Activated naive CD4-positive, alpha-beta T cell treated with anti-CD3 and anti-CD28 coated beads for 36 hours (primary cell): ENCODE measurements at regions of chr3 and their contacts with region 1.

Region 1: DNA sequence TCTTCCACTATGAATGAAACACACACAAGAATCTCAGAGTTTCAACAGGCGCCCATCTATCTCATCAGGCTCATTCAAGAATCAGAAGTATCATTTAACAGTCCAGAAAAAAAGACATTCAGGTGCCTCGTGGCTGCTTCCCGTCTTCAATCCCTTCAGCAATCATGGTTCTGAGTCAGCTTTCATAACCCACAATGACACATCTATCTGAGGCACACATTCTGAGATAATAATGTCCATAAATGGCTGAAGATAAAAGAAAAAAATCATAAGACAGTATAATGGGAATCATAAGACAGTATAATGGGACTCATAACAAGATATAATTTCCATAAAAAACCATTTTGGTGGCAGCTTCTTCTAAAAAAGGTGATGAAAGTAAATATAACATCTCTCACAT is 52.4 kb downstream of the TNIK start:
- DNase-seq: peak; percentile 39
- H3K4me3 Mint-ChIP-seq: no peak overlapping the region
- H3K27ac Mint-ChIP-seq: no peak overlapping the region
- H3K4me1 Mint-ChIP-seq: peaks cover 60% of the 10 kb centered on the region
- H3K27me3 Mint-ChIP-seq: no peaks in the 10 kb centered on the region

Region 2: GRCh38 chr3:171516765-171517164 is 109.0 kb after region 1 on chr3:
- CTCF ChIA-PET with region 1: interaction called, 12 read pairs
- intact Hi-C with region 1: no loop called
- DNase-seq: no peak
- H3K4me3 Mint-ChIP-seq: no peak overlapping the region
- H3K27ac Mint-ChIP-seq: no peak overlapping the region
- H3K4me1 Mint-ChIP-seq: peaks cover 1% of the 10 kb centered on the region
- H3K27me3 Mint-ChIP-seq: no peaks in the 10 kb centered on the region